Heart left ventricle (tissue), 16 donors: ENCODE measurements at regions of chr9 and their contacts with region 1.

Region 1: GRCh38 chr9:132214027-132214622 is 52.3 kb downstream of the NTNG2 start:
- DNase-seq: peak; percentile 84 to 95 (median 88)
- ATAC-seq: peak; percentile 94 to 98 (median 96)
- H3K4me3 ChIP-seq: no peak overlapping the region
- H3K27ac ChIP-seq: peak overlapping the region in 11 of 12 donors; percentile 58 to 85 (median 75)
- H3K4me1 ChIP-seq: peaks cover 0 to 24% (median 11%) of the 10 kb centered on the region in 12 donors
- H3K27me3 ChIP-seq: no peaks in the 10 kb centered on the region
- CTCF ChIP-seq: peak in 7 of 12 donors; percentile 5 to 33 (median 27)
- POLR2A ChIP-seq: no peak

Region 2: GRCh38 chr9:132182314-132183091 is 31.6 kb before region 1 on chr9:
- intact Hi-C with region 1: loop called in 1 of 10 experiments (anchors 2 kb)
- DNase-seq: peak in 3 of 5 donors; percentile 30 to 69 (median 59)
- ATAC-seq: peak; percentile 87 to 91 (median 88)
- H3K4me3 ChIP-seq: no peak overlapping the region
- H3K27ac ChIP-seq: peak overlapping the region in 9 of 12 donors; percentile 16 to 79 (median 67)
- H3K4me1 ChIP-seq: peaks cover 0 to 16% (median 6%) of the 10 kb centered on the region in 12 donors
- H3K27me3 ChIP-seq: peaks cover 0 to 3% (median 0%) of the 10 kb centered on the region in 9 donors
- CTCF ChIP-seq: peak in 3 of 12 donors; percentile 14 to 27 (median 21)
- POLR2A ChIP-seq: no peak